ENCODE measurements at regions of chr5 and their contacts with region 1.

Region 1: DNA sequence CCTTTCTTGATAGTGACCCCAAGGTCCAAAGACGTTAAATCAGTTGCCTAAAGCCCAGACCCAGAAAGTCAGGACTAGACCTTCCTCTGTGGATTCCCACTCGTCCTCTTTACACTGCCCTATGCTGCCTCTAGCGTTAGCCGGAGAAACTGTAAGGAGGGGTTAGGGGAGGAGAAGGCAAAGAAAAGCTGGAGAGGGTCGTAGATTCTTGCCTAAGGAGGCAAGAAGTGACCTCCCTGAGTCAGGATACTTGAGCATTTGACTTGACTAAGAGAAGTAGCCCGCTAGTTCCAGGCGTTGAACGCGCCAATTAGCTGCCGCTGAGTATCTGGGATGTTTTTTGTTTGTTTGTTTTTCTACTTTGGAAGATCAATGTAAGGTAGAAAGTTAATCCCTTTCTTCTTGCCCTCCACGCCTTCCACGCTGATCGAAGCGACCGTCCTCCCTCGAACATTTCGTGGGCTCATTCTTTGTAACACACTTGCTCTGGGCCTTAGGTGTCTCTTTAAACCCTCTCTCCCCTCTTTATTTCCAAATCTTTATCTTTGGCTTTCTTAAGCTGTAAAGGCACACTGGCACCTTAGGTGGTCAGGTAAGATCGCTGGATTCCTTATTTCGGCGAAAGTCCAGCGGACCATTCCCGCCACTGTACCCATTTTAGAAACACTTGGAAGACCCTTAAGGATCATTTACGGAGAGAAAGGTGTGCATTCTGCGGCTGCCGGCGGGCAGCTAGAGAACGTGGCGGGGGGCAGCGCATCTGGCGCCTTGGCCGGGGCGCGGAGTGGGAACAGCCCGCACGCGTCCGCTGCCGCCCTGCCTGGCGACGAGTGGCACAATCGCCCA is 5.1 kb upstream of the RGMB start:
- DNase-seq: peak; percentile 80
- ATAC-seq: peak; percentile 29
- H3K4me3 ChIP-seq: peak overlapping the region; percentile 89
- H3K27ac ChIP-seq: no peak overlapping the region
- H3K4me1 ChIP-seq: peaks cover 14% of the 10 kb centered on the region
- H3K27me3 ChIP-seq: no peaks in the 10 kb centered on the region
- CTCF ChIP-seq: peak; percentile 98

Region 2: GRCh38 chr5:98121036-98121934 is 647.1 kb before region 1 on chr5:
- CTCF ChIA-PET with region 1: no interaction called
- POLR2A ChIA-PET with region 1: interaction called, 10 read pairs
- intact Hi-C with region 1: no loop called
- DNase-seq: no peak
- ATAC-seq: no peak
- H3K4me3 ChIP-seq: no peak overlapping the region
- H3K27ac ChIP-seq: no peak overlapping the region
- H3K4me1 ChIP-seq: no peaks in the 10 kb centered on the region
- H3K27me3 ChIP-seq: no peaks in the 10 kb centered on the region
- CTCF ChIP-seq: no peak; the same call in 1 of the 2 replicates

Region 3: GRCh38 chr5:98631311-98632054 is 136.9 kb before region 1 on chr5:
- CTCF ChIA-PET with region 1: no interaction called
- POLR2A ChIA-PET with region 1: no interaction called
- intact Hi-C with region 1: loop called (anchors 5 kb)
- DNase-seq: peak; percentile 92
- ATAC-seq: peak; percentile 97
- H3K4me3 ChIP-seq: no peak overlapping the region
- H3K27ac ChIP-seq: peak overlapping the region; percentile 21
- H3K4me1 ChIP-seq: peaks cover 23% of the 10 kb centered on the region
- H3K27me3 ChIP-seq: no peaks in the 10 kb centered on the region
- CTCF ChIP-seq: no peak

Region 4: DNA sequence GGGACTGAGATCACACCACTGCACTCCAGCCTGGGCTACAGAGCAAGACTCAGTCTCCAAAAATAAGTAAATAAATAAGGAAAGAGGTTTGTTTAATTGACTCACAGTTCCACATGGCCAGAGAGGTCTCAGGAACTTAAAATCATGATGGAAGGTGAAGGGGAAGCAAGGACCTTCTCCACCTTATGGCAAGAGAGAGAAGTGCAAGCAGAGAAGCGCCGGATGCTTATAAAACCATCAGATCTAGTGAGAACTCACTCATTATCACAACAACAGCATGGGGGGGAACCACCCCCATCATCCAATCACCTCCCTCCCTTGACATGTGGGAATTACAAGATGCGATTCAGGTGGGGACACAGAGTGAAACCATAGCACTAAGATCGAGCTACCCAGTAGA is 17.7 kb before region 1 on chr5:
- CTCF ChIA-PET with region 1: interaction called, 12 read pairs
- POLR2A ChIA-PET with region 1: interaction called, 10 read pairs
- intact Hi-C with region 1: no loop called
- DNase-seq: peak; percentile 46
- ATAC-seq: peak; percentile 16; the same call in 1 of the 2 replicates
- H3K4me3 ChIP-seq: no peak overlapping the region
- H3K27ac ChIP-seq: no peak overlapping the region
- H3K4me1 ChIP-seq: peaks cover 21% of the 10 kb centered on the region
- H3K27me3 ChIP-seq: no peaks in the 10 kb centered on the region
- CTCF ChIP-seq: peak; percentile 61

Region 5: GRCh38 chr5:98796197-98796972 is 28.0 kb after region 1 on chr5:
- CTCF ChIA-PET with region 1: interaction called, 21 read pairs
- POLR2A ChIA-PET with region 1: interaction called, 4 read pairs
- intact Hi-C with region 1: loop called (anchors 1 kb)
- DNase-seq: peak; percentile 90
- ATAC-seq: peak; percentile 98
- H3K4me3 ChIP-seq: peak overlapping the region; percentile 16; the same call in 1 of the 2 replicates
- H3K27ac ChIP-seq: peak overlapping the region; percentile 33
- H3K4me1 ChIP-seq: peaks cover 12% of the 10 kb centered on the region
- H3K27me3 ChIP-seq: no peaks in the 10 kb centered on the region
- CTCF ChIP-seq: peak; percentile 93

Region 6: DNA sequence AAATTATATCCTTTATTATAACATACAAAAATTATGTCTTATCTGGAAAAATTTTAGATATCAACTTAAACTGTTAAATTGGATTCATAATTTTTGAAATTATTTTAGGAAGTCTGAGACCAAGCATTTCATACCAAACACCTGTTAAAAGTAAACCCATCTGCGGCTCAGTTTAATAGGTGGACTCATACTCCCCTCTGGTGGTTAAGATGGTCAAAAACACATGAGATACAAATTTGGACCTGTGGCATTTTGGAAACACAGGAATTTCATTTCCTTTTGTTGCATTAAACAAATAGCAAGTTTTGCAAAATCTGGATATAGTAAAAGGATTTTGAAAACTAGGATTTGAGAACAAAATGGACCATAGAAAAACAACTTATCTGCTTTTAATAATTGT is 58.8 kb after region 1 on chr5:
- CTCF ChIA-PET with region 1: no interaction called
- POLR2A ChIA-PET with region 1: no interaction called
- intact Hi-C with region 1: loop called (anchors 1 kb)
- DNase-seq: peak; percentile 80
- ATAC-seq: peak; percentile 91
- H3K4me3 ChIP-seq: no peak overlapping the region
- H3K27ac ChIP-seq: no peak overlapping the region
- H3K4me1 ChIP-seq: no peaks in the 10 kb centered on the region
- H3K27me3 ChIP-seq: no peaks in the 10 kb centered on the region
- CTCF ChIP-seq: peak; percentile 94